GM23248 (cell line): ENCODE measurements at regions of chr22 and their contacts with region 1.

Region 1: DNA sequence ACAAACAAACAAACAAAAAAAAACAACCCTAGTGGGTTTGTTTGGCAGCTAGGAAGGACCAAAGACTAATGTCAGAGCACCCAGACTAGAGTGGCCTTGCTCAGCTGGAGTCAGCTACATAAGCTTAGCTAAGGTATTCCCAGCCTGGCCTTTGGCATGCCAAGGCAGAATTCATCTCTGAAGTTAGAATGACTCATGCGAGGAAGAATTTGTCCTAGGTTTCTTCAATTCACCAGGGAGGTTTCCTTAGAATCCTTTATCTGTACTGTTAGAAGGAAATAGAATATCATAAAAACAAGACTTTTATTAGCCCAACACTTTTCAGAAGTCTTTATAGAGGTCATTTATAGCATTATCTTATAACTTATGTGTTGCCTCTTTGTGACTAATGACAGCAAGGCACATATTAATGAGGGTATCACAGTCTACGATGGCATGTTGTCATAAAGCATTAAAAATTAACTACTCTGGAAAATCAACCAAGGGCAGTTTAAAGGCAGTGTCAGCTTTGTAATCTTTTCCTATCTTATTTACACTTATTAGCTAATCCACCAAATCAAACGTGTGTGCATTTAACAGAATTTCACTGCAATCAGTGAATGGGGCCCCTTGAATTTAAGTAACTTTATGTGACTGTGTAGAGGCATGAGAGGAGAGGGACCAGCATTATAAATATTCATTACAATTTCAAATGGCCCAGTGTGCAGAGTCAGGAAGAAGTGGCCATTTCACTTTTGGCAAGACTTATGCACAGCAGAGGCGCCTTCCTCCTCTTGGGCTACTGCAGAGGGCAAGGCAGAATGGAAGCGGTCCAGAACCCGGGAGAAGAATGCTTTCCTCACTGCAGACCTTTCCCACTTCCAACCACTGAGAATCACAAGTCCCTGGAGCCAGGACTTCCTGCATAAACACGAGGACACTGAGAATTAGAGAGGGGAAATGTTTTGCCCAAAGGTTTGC is 36.3 kb downstream of the SLC5A1 start:
- DNase-seq: peak; percentile 86
- H3K4me3 ChIP-seq: no peak overlapping the region
- H3K27ac ChIP-seq: no peak overlapping the region
- H3K4me1 ChIP-seq: peaks cover 4% of the 10 kb centered on the region; the same call in 1 of the 2 replicates
- H3K27me3 ChIP-seq: peaks cover 23% of the 10 kb centered on the region

Region 2: DNA sequence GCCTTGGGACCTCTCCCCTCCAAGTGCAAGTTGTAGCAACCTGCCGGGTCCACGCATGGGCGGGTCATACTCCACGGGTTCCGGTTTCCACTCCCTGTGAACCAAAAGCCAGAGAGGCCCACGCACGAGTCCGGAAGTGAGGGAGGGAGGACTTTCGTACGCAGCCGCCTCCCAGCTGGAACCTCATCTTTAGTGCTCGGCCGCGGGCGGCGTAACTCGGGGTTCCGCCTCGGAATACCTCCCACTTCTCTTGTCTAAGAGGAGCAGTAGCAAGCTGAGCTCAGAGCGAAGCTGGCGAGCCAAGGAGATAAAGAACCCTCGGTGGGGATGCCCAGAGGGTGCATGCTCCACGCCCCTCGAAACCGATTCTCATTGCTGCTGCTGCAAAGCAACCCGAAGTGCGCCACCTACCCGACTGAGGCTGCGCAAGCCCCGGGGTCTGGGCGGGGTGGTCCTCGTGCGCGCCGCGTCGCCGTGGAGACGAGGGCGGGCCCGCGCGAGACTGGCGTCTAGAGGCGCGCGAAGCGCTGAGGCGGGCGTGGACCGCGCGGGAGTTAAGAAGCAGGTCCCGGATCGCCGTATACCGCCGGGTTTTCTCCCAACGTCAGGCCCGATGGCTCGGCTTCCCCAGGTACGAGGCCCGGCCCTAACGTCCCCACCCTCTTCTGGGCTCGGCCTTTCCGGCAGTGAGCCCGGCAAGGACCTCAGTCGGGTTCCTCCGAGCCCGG is 583.2 kb before region 1 on chr22 and contains the start of gene SFI1:
- in situ Hi-C with region 1: no loop called
- DNase-seq: peak; percentile 96
- H3K4me3 ChIP-seq: peak within 1 kb of the TSS; percentile 95
- H3K27ac ChIP-seq: peak within 1 kb of the TSS; percentile 80
- H3K4me1 ChIP-seq: peaks cover under 1% of the 10 kb centered on the region; the same call in 1 of the 2 replicates
- H3K27me3 ChIP-seq: no peaks in the 10 kb centered on the region
- total RNA-seq, gene SFI1: 17.5 and 21.6 TPM in 2 replicates

Region 3: DNA sequence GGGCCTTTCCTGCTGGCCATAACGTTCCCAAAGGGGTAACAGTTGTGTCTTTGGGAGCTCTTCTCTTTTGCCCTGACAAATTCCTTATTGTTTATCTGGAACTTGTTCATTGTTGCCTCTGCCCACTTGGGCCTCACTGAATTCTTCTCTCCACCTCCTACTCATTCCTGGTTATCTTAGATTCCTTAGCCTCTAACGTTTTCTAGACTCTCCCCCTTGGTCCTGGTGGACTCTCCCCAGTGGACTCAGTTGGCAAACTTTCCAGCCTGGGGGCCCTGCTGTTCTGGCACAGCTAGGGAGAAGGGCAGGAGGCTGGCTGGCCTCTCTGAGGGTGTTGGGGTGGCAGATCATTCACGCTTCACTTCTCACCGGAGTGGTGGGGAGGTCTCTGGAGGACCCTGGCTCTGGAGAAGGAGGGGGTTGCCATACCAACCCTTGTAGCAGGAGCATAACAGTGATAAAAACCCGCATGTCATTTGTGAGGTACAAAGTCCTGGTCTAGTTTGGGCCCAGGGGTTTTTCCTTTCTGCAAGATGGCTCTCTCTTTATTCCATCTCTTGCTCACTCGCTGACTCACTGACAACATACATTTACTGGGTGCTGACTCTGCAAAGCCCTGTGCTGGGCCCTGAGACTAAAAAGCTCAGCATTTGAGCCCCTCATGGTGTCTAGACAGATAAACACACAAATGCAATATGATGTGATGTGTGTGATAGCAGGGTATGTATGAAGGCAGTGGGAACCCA is 95.3 kb before region 1 on chr22:
- in situ Hi-C with region 1: loop called (anchors 10 kb)
- DNase-seq: peak; percentile 11
- H3K4me3 ChIP-seq: no peak overlapping the region
- H3K27ac ChIP-seq: no peak overlapping the region
- H3K4me1 ChIP-seq: no peaks in the 10 kb centered on the region
- H3K27me3 ChIP-seq: no peaks in the 10 kb centered on the region